Sciatic nerve (tissue), 2 donors: ENCODE measurements at regions of chr12 and their contacts with region 1.

Region 1: GRCh38 chr12:40837891-40838429 is 145.7 kb downstream of the CNTN1 start:
- DNase-seq: no peak
- ATAC-seq: no peak

Region 2: GRCh38 chr12:40827683-40828592 is 10.0 kb before region 1 on chr12:
- intact Hi-C with region 1: loop called (anchors 1 kb)
- DNase-seq: no peak
- ATAC-seq: no peak

Region 3: DNA sequence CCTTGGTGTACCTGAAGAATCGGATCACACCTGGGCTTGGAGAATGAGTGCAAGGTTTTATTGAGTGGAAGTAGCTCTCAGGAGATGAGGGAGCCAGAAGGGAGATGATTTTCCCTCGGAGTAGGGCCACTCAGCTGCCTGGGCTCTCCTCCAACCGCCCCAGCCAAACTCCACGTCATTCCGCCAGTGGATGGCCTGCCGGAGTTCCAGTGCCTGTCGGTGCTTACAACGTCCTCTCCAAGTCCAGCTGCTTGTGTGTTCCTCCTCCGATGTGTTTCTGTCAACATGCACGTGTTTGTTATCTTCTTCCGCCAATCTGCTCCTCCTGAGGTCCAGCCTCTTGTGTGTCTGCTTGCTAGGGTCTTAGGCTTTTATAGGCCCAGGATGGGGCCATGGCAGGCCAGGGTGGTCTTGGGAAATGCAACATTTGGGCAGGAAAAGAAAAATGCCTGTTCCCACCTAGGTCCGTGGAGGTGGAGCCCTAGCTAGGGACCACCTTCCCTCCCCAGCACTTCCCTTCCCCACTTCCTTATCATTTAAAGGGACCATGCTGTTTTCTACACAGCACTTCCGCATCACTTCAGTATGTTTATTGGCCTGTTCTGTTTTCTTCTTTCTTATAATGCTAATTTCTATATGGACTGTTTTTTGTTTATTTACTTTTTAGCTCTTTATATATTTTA is 693.3 kb after region 1 on chr12:
- intact Hi-C with region 1: no loop called
- DNase-seq: no peak
- ATAC-seq: peak; percentile 80